ENCODE measurements at regions of chr3 and their contacts with region 1.

Region 1: GRCh38 chr3:16550676-16551341 is 37.3 kb upstream of the RFTN1 start:
- DNase-seq: peak; percentile 50 to 61
- ATAC-seq: peak; percentile 88 to 96
- H3K4me3 ChIP-seq: peak overlapping the region in 2 of 4 donors; percentile 11 to 21
- H3K27ac ChIP-seq: peak overlapping the region in 2 of 4 donors; percentile 37 to 43
- H3K4me1 ChIP-seq: peaks cover 0 to 18% of the 10 kb centered on the region in 2 donors
- H3K27me3 ChIP-seq: no peaks in the 10 kb centered on the region
- CTCF ChIP-seq: peak; percentile 80 to 94 (median 88)
- POLR2A ChIP-seq: no peak

Region 2: GRCh38 chr3:16264708-16265454 is 285.9 kb before region 1 on chr3 and contains the starts of genes DPH3 and OXNAD1:
- in situ Hi-C with region 1: no loop called
- intact Hi-C with region 1: loop called (anchors 1 kb)
- DNase-seq: peak; percentile 100
- ATAC-seq: peak; percentile 93 to 95
- H3K4me3 ChIP-seq: peak within 1 kb of the TSS; percentile 65 to 91 (median 81)
- H3K27ac ChIP-seq: peak within 1 kb of the TSS; percentile 89 to 98 (median 92)
- H3K4me1 ChIP-seq: peaks cover 40 to 43% of the 10 kb centered on the region in 2 donors
- H3K27me3 ChIP-seq: no peaks in the 10 kb centered on the region
- CTCF ChIP-seq: peak; percentile 22 to 36 (median 32)
- POLR2A ChIP-seq: peak; percentile 80 to 90
- total RNA-seq, gene DPH3: 40.3 to 66.6 (median 44.2) TPM
- total RNA-seq, gene OXNAD1: 12.3 to 28.6 (median 17.1) TPM

Region 3: DNA sequence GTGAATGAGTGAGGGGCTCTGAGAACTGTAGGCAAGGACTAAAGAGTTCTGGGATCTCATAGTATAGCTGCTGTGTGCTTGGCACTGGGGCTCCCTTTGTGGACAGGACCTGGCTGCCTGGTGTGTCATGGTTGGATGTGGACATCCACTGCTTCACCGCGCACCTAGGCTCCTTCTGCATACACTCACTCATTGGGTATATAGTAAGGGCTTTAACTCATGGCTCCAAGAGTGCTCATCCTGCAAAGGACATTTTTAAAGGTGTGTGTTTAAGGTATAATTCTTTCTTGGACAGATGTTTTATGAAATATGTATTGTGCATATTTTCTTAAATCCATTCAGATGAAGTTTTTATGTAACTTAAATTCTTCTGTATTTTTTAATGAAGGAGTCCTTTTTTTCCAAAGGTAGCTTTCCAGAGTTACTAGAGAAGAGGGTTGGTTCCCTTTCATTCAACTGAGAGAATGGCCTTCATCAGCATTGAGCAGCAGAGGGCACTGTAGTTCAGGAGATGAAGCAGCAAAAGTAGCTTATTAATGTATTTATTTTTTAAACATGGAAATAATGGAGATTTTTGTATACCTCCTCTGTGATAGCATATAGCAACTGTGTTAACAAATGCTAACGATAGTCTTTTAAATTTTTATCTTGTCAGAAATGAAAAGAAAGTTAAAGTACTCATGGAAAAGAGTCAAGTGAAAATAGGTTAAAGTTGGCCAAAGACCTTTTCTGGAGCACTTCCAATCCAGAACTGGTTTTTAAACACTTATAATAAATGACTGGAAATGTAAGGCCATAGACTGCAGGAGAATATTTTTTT is 260.6 kb before region 1 on chr3:
- in situ Hi-C with region 1: loop called (anchors 5 kb)
- intact Hi-C with region 1: loop called (anchors 1 kb)
- DNase-seq: peak in 1 of 2 donors; percentile 26
- ATAC-seq: no peak
- H3K4me3 ChIP-seq: no peak overlapping the region
- H3K27ac ChIP-seq: peak overlapping the region in 3 of 4 donors; percentile 75 to 83 (median 76)
- H3K4me1 ChIP-seq: peaks cover 50 to 57% of the 10 kb centered on the region in 2 donors
- H3K27me3 ChIP-seq: no peaks in the 10 kb centered on the region
- CTCF ChIP-seq: peak; percentile 60 to 83 (median 79)
- POLR2A ChIP-seq: no peak

Region 4: DNA sequence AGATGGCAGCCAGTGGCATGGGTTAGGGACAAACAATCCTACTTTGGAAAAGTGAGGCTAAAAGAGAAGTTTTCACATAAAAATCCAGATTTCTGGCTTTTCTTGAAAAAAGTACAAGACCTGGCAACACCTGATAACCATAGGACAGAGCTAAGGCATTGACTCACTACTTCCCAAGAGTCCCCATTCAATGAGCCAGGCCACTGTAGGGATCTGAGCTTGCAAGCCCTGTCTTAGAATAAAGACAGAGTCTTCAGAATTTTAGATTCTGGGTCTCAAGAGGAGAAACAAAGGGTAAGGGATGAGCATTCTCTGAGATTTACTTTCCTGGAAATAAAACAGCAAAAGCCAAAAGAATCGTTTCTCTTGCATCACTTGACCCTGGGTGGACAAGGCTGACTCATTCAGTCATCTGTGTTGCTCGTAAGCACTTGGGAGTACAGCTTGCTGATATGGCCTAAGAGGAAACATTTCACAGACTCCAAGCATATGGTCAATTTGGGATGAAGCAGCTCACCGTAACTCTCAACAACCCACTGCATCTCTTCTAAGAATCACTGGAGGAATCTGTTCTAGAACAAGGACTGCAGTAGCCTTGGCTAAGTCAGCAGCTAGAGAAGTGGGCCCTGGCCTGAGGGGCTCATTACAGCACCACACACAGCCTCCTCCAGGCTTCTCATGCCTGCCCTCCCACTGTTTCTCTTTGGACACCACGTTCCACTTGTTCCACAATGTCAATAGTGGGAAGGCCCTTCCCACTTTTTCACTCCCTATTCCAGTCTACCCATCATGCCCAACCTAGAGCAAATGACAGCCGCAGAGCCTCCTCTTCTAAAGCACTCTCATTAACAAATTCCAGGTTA is 123.5 kb before region 1 on chr3:
- in situ Hi-C with region 1: no loop called
- intact Hi-C with region 1: no loop called
- DNase-seq: peak; percentile 28 to 29
- ATAC-seq: peak; percentile 89 to 93
- H3K4me3 ChIP-seq: no peak overlapping the region
- H3K27ac ChIP-seq: peak overlapping the region; percentile 42 to 67 (median 56)
- H3K4me1 ChIP-seq: no peaks in the 10 kb centered on the region
- H3K27me3 ChIP-seq: no peaks in the 10 kb centered on the region
- CTCF ChIP-seq: no peak
- POLR2A ChIP-seq: no peak

Region 5: GRCh38 chr3:16511681-16512434 is 39.0 kb before region 1 on chr3:
- in situ Hi-C with region 1: no loop called
- intact Hi-C with region 1: loop called (anchors 5 kb)
- DNase-seq: peak; percentile 45 to 61
- ATAC-seq: peak; percentile 69 to 77
- H3K4me3 ChIP-seq: peak overlapping the region; percentile 73 to 83 (median 80)
- H3K27ac ChIP-seq: peak overlapping the region; percentile 75 to 86 (median 78)
- H3K4me1 ChIP-seq: peaks cover 40 to 55% of the 10 kb centered on the region in 2 donors
- H3K27me3 ChIP-seq: no peaks in the 10 kb centered on the region
- CTCF ChIP-seq: no peak
- POLR2A ChIP-seq: no peak

Region 6: GRCh38 chr3:17412950-17413530 is 862.2 kb after region 1 on chr3:
- in situ Hi-C with region 1: no loop called
- intact Hi-C with region 1: no loop called
- DNase-seq: no peak
- ATAC-seq: peak; percentile 73 to 78
- H3K4me3 ChIP-seq: no peak overlapping the region
- H3K27ac ChIP-seq: no peak overlapping the region
- H3K4me1 ChIP-seq: peaks cover 0 to 12% of the 10 kb centered on the region in 2 donors
- H3K27me3 ChIP-seq: no peaks in the 10 kb centered on the region
- CTCF ChIP-seq: peak; percentile 49 to 82 (median 64)
- POLR2A ChIP-seq: no peak

Measured in gastrocnemius medialis (tissue), 4 donors.